ENCODE measurements at regions of chr11 and their contacts with region 1.

Region 1: DNA sequence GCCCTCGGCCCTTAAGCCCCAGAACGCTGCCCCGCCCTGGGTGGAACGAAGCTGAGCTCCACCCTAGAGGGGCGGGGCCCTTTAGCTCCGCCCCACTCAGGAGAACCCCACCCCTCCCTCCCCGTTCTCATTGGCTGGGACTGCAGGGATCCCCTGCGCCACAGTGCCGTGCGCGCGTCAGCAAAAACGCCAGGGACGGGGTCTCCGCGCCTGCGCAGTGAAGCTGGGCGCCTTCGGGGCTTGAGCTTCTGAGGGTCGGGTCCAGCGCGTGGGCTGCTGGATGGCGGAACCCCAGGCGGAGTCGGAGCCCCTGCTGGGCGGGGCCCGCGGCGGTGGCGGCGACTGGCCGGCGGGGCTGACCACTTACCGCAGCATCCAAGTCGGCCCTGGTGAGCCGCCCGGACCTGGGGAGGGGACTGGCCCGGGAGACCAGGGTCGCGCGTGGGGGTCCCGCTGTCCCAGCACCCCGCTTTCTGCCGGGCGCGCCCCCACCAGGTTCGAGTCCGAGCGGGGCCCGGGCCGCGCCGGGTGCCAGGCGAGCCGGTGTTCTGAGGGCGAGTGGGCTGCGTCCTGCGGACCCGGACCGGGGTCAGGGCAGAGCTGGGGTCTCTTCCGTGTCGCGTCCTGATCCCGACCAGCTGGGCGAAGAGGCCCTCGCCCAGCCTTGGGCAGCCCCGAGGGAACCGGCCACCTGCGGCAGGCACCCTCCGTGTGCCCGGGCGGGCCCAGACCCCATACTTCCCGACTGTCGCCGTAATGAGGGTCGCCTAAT is at the start of gene TPCN2:
- DNase-seq: peak; percentile 79 to 98 (median 89)
- ATAC-seq: peak; percentile 98
- H3K4me3 ChIP-seq: peak within 1 kb of the TSS; percentile 61 to 70
- H3K4me3 Mint-ChIP-seq: peak within 1 kb of the TSS; percentile 79
- H3K27ac ChIP-seq: peak within 1 kb of the TSS; percentile 74 to 91
- H3K27ac Mint-ChIP-seq: peak within 1 kb of the TSS; percentile 92
- H3K4me1 ChIP-seq: peaks cover 9% of the 10 kb centered on the region
- H3K4me1 Mint-ChIP-seq: peaks cover 28% of the 10 kb centered on the region
- H3K27me3 ChIP-seq: no peaks in the 10 kb centered on the region
- H3K27me3 Mint-ChIP-seq: no peaks in the 10 kb centered on the region
- CTCF ChIP-seq: no peak
- total RNA-seq, gene TPCN2: 13.1 to 15.0 TPM

Region 2: DNA sequence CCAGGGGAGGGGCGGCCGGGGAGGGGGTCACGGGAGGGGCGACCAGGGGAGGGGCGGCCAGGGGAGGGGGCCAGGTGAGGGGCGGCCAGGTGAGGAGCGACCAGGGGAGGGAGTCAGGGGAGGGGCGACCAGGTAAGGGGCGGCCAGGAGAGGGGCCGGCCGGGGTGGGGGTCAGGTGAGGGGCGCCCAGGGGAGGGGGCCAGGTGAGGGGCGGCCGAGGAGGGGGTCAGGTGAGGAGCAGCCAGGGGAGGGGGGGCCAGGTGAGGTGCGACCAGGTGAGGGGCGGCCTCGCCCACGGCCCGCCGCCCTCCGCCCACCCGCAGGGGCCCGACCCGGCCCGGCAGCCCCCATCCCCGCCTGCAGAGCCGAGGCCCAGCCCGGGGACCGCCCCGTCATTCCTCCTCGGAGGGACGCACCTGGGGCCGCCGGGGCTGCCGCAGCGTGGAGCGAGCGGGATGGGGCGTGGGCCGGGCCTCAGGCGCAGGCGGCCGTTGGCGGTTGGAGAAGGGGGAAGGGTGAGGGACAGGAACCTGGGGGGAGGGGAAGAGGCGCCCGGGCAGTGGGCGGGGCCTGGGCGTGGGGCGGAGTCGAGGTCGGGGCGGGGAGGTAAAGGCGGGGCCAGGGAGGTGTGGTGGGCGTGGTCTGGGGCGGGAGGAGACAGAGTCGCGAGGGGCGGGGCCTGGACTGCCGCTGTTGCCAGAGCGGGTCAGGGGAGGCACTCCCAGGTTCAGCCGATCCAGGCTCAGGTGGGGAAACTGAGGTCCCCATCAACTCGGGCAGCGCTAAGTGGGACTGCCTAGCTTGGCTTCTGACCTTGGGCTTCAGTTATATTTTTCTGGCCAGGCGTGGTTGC is 297.7 kb before region 1 on chr11 and contains the start of gene TESMIN:
- CTCF ChIA-PET with region 1: no interaction called
- POLR2A ChIA-PET with region 1: no interaction called
- intact Hi-C with region 1: loop called in 1 of 2 experiments (anchors 5 kb)
- DNase-seq: peak; percentile 83 to 95 (median 91)
- ATAC-seq: peak; percentile 99
- H3K4me3 ChIP-seq: peak within 1 kb of the TSS; percentile 30 to 50
- H3K4me3 Mint-ChIP-seq: peak within 1 kb of the TSS; percentile 72
- H3K27ac ChIP-seq: no peak within 1 kb of the TSS
- H3K27ac Mint-ChIP-seq: no peak within 1 kb of the TSS
- H3K4me1 ChIP-seq: peaks cover 7% of the 10 kb centered on the region
- H3K4me1 Mint-ChIP-seq: peaks cover 13% of the 10 kb centered on the region
- H3K27me3 ChIP-seq: no peaks in the 10 kb centered on the region
- H3K27me3 Mint-ChIP-seq: no peaks in the 10 kb centered on the region
- CTCF ChIP-seq: no peak
- total RNA-seq, gene TESMIN: 1.8 to 2.5 TPM

Measured in CD8-positive, alpha-beta T cell (primary cell).